PC-9 (cell line): ENCODE measurements at regions of chr3 and their contacts with region 1.

Region 1: DNA sequence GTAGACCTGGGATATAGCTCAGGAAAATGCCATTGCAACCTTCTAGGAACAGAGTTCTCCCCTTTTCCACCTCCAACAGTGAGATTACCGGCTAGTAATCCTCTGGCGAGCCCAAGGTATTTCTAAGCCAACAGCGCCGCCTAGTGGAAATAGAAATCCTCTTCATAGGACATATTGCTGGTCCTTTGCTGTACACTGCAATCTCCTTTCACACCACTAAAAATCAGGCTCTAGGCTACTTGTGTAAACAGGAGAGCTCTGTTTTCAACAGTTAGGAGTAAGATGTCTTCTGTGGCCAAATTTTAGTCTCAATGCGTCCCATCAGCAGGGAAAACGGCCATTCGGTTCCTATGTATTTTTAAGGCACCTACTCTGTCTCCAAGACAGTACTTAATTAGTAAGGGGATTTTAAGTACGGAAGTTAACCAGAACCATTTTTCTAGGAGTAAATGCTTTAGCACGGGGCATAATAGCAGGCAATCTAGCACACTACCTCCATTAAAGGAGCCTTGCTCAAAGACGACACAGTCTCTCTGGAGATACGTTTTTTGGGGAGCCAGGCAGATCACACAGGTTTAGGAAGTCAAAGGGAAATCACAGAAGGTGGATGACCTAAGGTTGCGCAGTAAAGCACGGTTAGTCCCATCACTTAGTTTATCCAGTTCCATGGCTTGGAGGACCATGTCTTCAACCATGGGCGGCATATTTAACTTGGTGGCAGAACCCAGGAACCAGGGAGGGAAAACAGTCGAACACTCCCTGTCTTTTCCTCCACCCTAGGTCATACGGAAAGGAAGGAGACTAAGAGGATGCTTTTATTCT is 43.8 kb downstream of the NCEH1 start:
- DNase-seq: peak; percentile 79 to 82
- H3K4me3 ChIP-seq: no peak overlapping the region
- H3K27ac ChIP-seq: no peak overlapping the region
- H3K4me1 ChIP-seq: no peaks in the 10 kb centered on the region
- H3K27me3 ChIP-seq: no peaks in the 10 kb centered on the region
- CTCF ChIP-seq: peak; percentile 94

Region 2: GRCh38 chr3:172084871-172085556 is 582.1 kb before region 1 on chr3:
- CTCF ChIA-PET with region 1: interaction called, 12 read pairs
- POLR2A ChIA-PET with region 1: no interaction called
- intact Hi-C with region 1: no loop called
- DNase-seq: no peak
- H3K4me3 ChIP-seq: no peak overlapping the region
- H3K27ac ChIP-seq: peak overlapping the region; percentile 46
- H3K4me1 ChIP-seq: peaks cover 32% of the 10 kb centered on the region
- H3K27me3 ChIP-seq: no peaks in the 10 kb centered on the region
- CTCF ChIP-seq: no peak

Region 3: DNA sequence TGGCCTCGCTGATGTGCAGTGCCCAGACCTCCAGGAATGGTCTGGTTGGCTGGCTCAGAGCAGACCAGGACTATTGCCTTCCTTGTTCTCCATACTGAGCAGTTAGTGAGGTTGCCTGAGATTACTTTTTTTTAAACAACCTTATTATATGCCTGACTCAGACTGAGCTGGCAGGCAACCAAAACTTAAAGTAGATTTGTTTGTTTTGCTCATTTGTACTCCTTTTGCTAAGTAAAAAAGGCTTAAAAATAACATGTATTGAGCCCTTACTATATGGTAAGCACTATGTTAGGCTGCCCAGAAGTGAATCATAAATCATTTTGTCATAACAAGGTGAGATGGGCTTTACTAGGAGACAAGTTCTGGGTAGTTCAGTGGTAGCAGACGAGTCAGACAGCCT is 311.2 kb before region 1 on chr3:
- CTCF ChIA-PET with region 1: no interaction called
- POLR2A ChIA-PET with region 1: no interaction called
- intact Hi-C with region 1: loop called (anchors 5 kb)
- DNase-seq: peak; percentile 25 to 80
- H3K4me3 ChIP-seq: no peak overlapping the region
- H3K27ac ChIP-seq: peak overlapping the region; percentile 36; the same call in 1 of the 2 replicates
- H3K4me1 ChIP-seq: peaks cover 20% of the 10 kb centered on the region
- H3K27me3 ChIP-seq: no peaks in the 10 kb centered on the region
- CTCF ChIP-seq: no peak

Region 4: DNA sequence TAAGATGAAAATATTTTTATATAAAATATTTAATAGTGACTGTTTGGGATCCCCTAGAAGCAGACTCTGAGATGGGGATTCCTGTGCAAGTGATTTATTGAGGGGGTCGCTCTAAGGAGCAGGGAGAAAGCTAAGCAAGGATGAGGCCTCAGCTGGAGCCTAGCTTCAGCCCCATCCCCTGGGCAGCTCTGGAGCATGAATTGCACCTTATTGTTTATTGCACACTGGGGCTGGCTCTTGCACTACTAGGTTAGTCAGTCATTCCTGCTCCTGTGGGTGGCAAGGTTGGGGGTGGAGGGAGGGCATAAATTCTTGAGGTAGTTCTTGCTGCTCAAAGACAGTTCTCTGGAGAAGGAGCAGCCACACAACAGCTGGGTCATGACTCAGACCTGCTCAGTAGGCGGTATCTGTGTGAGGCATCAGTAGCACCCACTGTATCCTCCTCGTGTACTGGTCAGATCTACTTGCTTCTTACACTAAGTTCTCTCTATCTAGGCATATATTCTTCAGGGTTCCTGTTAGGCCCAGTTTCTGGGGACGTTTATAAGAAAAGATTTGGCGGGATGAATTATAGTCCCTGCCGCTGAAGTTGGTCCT is 116.6 kb before region 1 on chr3:
- CTCF ChIA-PET with region 1: no interaction called
- POLR2A ChIA-PET with region 1: interaction called, 4 read pairs
- intact Hi-C with region 1: loop called (anchors 1 kb)
- DNase-seq: peak; percentile 79 to 88
- H3K4me3 ChIP-seq: no peak overlapping the region
- H3K27ac ChIP-seq: no peak overlapping the region
- H3K4me1 ChIP-seq: peaks cover 50% of the 10 kb centered on the region
- H3K27me3 ChIP-seq: no peaks in the 10 kb centered on the region
- CTCF ChIP-seq: no peak

Region 5: DNA sequence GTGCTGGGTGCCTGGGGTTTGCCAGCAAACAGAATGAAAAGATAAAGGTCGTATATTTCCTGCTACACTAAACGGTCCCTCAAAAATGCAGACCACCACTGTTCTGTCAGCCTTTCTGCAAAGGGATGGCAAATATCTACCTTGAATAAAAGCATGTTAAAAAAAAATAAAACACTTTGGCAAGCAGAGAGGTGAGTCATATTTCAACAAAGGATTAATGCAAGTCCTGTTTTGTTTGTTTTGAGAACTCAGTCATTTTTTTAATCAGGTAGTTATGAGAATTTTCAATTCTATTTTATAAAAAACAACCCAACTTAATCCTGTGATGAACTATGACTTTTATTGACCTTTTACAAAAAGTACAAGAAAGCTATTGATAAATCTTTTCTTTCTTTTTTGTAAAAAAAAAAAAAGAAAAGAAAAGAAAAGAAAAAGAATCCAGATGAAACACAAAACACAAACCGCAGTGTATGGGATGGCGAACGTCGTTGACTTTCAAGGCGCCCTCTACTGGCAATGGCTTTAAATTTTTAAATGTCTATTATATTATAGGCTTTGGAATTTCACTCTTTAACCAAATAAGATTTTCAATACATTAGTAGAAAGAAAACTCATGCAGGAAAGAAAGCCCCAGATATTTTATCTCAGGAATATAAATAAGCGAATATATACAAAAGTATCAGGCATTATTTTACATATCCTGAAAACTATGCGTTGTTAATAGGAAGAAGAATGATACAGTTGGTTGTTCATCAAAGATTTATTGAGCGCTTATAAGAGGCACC is 44.0 kb before region 1 on chr3:
- CTCF ChIA-PET with region 1: interaction called, 16 read pairs
- POLR2A ChIA-PET with region 1: no interaction called
- intact Hi-C with region 1: loop called (anchors 2 kb)
- DNase-seq: peak; percentile 46 to 87
- H3K4me3 ChIP-seq: peak overlapping the region; percentile 30; the same call in 1 of the 2 replicates
- H3K27ac ChIP-seq: peak overlapping the region; percentile 38; the same call in 1 of the 2 replicates
- H3K4me1 ChIP-seq: peaks cover 37% of the 10 kb centered on the region
- H3K27me3 ChIP-seq: no peaks in the 10 kb centered on the region
- CTCF ChIP-seq: peak; percentile 95

Region 6: DNA sequence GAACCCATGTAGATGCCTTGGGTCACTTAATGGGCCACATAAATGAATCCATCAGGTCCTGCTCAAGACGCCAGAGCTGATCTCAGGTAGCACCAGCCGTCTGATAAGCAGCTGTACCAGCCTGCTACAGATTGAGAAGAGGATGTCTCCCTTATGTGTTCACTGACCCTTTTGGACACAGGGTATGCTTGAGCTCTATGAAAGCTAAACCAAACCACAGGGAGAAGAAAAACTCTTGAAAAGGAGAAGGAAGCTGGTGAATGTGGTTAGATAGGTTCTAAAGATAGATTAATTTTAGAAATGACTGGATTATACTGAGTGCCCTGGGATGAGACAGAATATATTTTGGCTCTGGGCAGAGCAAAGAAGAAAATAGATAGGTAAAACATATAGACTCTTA is 286.5 kb after region 1 on chr3:
- CTCF ChIA-PET with region 1: no interaction called
- POLR2A ChIA-PET with region 1: no interaction called
- intact Hi-C with region 1: no loop called
- DNase-seq: no peak
- H3K4me3 ChIP-seq: no peak overlapping the region
- H3K27ac ChIP-seq: no peak overlapping the region
- H3K4me1 ChIP-seq: no peaks in the 10 kb centered on the region
- H3K27me3 ChIP-seq: no peaks in the 10 kb centered on the region
- CTCF ChIP-seq: no peak